ENCODE measurements at regions of chr11 and their contacts with region 1.

Region 1: DNA sequence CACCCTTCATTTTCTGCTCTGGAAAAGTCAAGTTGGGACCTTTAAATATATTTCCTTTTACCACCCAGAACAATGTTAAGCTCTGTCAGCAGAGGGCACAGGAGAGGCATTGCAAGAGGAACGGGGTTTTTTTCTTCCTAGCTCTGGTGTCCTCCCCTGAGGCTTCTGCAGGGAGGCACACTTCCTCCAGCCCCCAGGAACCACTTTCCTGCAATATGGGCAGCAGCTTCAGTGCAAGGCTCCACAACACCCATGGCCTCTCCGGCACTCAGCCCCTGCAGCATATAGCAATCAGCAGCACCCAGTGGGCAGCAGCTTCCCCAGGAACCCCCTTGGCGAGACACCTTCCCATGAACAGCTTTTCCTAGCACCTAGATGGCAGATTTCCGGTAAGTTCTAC is 101.4 kb downstream of the SYT9 start:
- DNase-seq: peak; percentile 68
- H3K4me3 ChIP-seq: no peak overlapping the region
- H3K27ac ChIP-seq: no peak overlapping the region
- H3K4me1 ChIP-seq: no peaks in the 10 kb centered on the region
- CTCF ChIP-seq: peak; percentile 88

Region 2: GRCh38 chr11:7332962-7333361 is 20.1 kb before region 1 on chr11:
- CTCF ChIA-PET with region 1: no interaction called
- POLR2A ChIA-PET with region 1: no interaction called
- intact Hi-C with region 1: no loop called
- DNase-seq: no peak
- H3K4me3 ChIP-seq: no peak overlapping the region
- H3K27ac ChIP-seq: no peak overlapping the region
- H3K4me1 ChIP-seq: no peaks in the 10 kb centered on the region
- CTCF ChIP-seq: no peak

Region 3: DNA sequence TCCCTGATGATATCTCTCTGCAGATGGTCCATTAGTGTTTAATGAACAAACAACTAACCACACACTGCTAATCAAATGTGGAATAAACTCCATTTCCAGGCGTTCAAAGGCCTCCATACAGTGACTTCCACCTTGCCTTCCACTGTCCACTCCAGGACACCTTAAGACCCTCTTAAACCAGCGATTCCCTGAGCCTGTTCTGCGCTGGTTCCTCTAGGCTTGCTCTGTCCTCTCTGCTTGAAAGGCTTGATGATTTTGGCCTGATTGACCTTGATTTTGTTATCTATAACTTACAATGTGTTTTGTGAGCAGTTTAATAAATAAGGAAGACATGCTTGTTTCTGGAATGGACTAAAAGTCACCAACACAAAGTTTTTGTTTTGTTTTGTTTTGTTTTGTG is 341.1 kb after region 1 on chr11:
- CTCF ChIA-PET with region 1: interaction called, 3 read pairs
- POLR2A ChIA-PET with region 1: no interaction called
- intact Hi-C with region 1: loop called (anchors 1 kb)
- DNase-seq: no peak
- H3K4me3 ChIP-seq: no peak overlapping the region
- H3K27ac ChIP-seq: no peak overlapping the region
- H3K4me1 ChIP-seq: no peaks in the 10 kb centered on the region
- CTCF ChIP-seq: no peak

Measured in OCI-LY7 (cell line).